ENCODE measurements at regions of chr6 and their contacts with region 1.

Region 1: DNA sequence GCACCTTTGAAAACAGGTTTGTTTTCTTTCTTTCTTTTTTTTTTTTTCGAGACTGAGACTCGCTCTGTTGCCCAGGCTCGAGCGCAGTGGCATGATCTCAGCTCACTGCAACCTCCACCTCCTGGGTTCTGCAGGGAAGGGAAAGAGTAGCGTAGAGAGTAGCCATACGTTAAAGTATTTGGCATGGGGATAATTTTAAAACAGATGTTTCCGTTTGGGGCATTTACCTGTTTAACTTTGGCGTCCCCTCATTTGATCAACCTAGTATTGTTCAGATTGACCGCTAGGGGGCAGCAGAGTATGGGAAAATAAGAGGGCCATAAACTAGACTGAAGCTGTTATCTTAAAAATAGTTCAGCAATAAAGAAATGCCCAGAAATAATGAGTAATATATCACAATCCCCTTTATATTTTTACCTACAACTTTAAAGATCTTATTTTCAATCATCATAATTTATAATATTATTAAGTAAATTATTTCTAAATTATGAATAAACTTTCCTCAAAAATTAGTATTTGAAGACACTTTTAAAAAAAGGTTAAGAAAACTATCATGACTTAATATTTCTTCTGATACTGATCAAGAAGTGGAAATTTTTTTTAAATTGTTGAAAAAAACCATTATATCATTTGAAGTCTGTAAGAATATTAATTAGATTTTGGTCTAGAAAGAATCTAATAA is 7.6 kb upstream of the TAAR9 start:
- DNase-seq: peak; percentile 14 to 24
- ATAC-seq: peak; percentile 54 to 82
- H3K4me3 ChIP-seq: no peak overlapping the region
- H3K27ac ChIP-seq: no peak overlapping the region
- H3K4me1 ChIP-seq: no peaks in the 10 kb centered on the region
- H3K27me3 ChIP-seq: no peaks in the 10 kb centered on the region
- CTCF ChIP-seq: peak; percentile 55 to 86 (median 68)
- POLR2A ChIP-seq: no peak

Region 2: DNA sequence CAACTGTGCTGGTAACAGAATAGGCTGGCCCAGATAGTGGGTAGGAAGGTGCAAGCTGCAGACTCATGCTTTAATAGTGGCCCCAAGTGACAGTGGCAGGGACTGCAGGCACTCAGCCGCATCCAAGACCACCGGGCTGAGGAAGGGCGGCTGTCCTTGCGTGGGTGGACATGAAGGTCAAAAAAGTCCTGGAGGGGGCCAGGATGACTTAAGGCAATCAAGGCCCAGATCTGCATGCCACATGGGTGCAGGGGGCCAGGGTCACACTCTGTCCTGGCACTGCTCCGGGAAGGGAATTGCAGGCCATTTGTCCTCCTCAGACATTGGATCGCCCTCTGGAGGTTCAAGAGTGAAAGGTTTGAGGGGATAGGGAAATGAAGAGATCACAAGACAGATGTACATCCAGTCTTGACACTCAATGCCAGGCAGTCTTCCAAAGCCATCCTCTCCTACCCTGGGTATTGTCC is 237.7 kb after region 1 on chr6:
- in situ Hi-C with region 1: loop called in 1 of 4 experiments (anchors 25 kb)
- intact Hi-C with region 1: no loop called
- DNase-seq: no peak
- ATAC-seq: no peak
- H3K4me3 ChIP-seq: no peak overlapping the region
- H3K27ac ChIP-seq: no peak overlapping the region
- H3K4me1 ChIP-seq: no peaks in the 10 kb centered on the region
- H3K27me3 ChIP-seq: no peaks in the 10 kb centered on the region
- CTCF ChIP-seq: peak in 3 of 5 experiments; percentile 17 to 37 (median 19)
- POLR2A ChIP-seq: no peak

Region 3: DNA sequence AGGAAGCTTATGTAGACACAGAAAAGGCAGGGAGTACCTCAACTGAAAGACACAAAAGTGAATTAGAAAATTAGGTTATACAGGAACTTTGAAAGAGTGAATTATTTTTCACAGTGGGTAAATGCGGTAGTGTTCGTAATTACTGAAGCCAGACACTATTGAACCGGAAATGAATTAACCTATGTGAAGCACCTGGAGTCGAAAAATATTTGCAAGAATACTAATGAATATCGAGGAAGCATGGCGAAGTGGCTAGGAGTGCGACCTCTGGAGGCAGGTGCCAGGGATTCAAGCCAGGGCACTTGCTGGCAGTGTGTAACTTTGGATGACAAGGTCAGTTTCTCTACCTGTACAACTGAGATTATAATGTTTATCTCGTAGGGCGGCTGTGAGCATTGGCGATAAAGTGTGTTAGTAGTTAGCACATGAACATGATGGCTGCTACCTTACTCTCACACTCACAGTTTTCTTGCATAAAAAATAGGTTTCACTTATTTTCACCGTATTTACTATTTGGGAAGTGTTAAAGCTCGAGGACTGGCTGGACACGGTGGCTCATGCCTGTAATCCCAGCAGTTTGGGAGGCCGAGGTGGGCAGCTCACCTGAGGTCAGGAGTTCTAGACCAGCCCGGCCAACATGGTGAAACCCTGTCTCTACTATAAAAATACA is 268.6 kb after region 1 on chr6:
- in situ Hi-C with region 1: loop called in 1 of 4 experiments (anchors 25 kb)
- intact Hi-C with region 1: loop called (anchors 2 kb)
- DNase-seq: peak; percentile 56 to 75
- ATAC-seq: peak; percentile 90
- H3K4me3 ChIP-seq: peak overlapping the region; percentile 65 to 82 (median 71)
- H3K27ac ChIP-seq: no peak overlapping the region
- H3K4me1 ChIP-seq: peaks cover 6 to 7% of the 10 kb centered on the region in 2 donors
- H3K27me3 ChIP-seq: no peaks in the 10 kb centered on the region
- CTCF ChIP-seq: peak; percentile 16 to 77 (median 54)
- POLR2A ChIP-seq: no peak